A673 (cell line): ENCODE measurements at regions of chr16 and their contacts with region 1.

Region 1: DNA sequence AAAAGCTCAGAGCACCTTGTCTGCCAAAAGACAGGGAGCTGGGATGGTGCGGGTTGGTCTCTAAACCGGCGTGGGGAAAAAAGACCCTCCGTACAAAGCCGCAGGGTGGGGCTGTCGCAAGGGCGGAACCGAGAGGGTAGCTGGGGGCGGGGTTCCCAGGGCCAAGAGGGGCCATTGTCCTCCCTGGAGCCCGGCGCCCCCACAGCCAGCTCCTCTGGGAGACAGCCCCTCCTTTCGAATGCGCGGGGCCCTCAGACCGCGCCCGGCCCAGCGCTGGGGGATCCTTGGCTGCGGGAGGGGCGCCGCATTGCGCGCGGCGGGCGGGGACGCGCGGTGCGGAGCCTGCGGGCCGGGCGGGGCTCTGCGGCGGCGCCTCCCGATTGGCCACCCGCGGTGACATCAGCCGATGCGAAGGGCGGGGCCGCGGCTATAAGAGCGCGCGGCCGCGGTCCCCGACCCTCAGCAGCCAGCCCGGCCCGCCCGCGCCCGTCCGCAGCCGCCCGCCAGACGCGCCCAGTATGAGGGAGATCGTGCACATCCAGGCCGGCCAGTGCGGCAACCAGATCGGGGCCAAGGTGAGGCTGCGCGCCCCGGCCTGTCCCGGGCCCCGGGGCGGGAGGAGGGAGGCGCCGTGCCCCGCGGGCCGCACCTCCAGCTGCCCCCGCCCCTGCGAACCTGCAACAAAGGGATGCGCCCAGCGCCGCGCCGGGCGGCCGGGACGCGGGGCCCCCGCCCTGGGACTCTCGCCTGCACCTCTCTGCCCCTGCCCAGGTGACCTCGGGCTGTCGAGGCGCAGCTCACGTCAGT is at the start of gene TUBB3:
- DNase-seq: peak; percentile 92
- H3K4me3 ChIP-seq: peak within 1 kb of the TSS; percentile 95
- H3K27ac ChIP-seq: peak within 1 kb of the TSS; percentile 78
- H3K4me1 ChIP-seq: peaks cover 50% of the 10 kb centered on the region
- H3K27me3 ChIP-seq: no peaks in the 10 kb centered on the region
- CTCF ChIP-seq: no peak
- total RNA-seq, gene TUBB3: 273 and 297 TPM in 2 replicates

Region 2: GRCh38 chr16:89531821-89532526 is 391.1 kb before region 1 on chr16:
- CTCF ChIA-PET with region 1: interaction called, 12 read pairs
- POLR2A ChIA-PET with region 1: no interaction called
- intact Hi-C with region 1: no loop called
- DNase-seq: no peak
- H3K4me3 ChIP-seq: no peak overlapping the region
- H3K27ac ChIP-seq: no peak overlapping the region
- H3K4me1 ChIP-seq: no peaks in the 10 kb centered on the region
- H3K27me3 ChIP-seq: no peaks in the 10 kb centered on the region
- CTCF ChIP-seq: no peak

Region 3: GRCh38 chr16:89972244-89973234 is 49.5 kb after region 1 on chr16:
- CTCF ChIA-PET with region 1: no interaction called
- POLR2A ChIA-PET with region 1: no interaction called
- intact Hi-C with region 1: loop called (anchors 2 kb)
- DNase-seq: peak; percentile 97
- H3K4me3 ChIP-seq: peak overlapping the region; percentile 100
- H3K27ac ChIP-seq: peak overlapping the region; percentile 96
- H3K4me1 ChIP-seq: peaks cover 18% of the 10 kb centered on the region
- H3K27me3 ChIP-seq: no peaks in the 10 kb centered on the region
- CTCF ChIP-seq: no peak

Region 4: GRCh38 chr16:90022209-90023064 is 99.3 kb after region 1 on chr16:
- CTCF ChIA-PET with region 1: no interaction called
- POLR2A ChIA-PET with region 1: no interaction called
- intact Hi-C with region 1: loop called (anchors 10 kb)
- DNase-seq: peak; percentile 96
- H3K4me3 ChIP-seq: peak overlapping the region; percentile 81
- H3K27ac ChIP-seq: peak overlapping the region; percentile 90
- H3K4me1 ChIP-seq: peaks cover 27% of the 10 kb centered on the region
- H3K27me3 ChIP-seq: no peaks in the 10 kb centered on the region
- CTCF ChIP-seq: no peak